HepG2 (cell line): ENCODE measurements at regions of chr17 and their contacts with region 1.

Region 1: GRCh38 chr17:45385331-45385997 is 47.2 kb downstream of the ARHGAP27 start:
- DNase-seq: peak; percentile 73
- ATAC-seq: peak; percentile 93
- H3K4me3 ChIP-seq: peak overlapping the region in 1 of 3 experiments; percentile 13; a peak in 1 of 6 replicates
- H3K27ac ChIP-seq: no peak overlapping the region
- H3K4me1 ChIP-seq: peaks cover 14% of the 10 kb centered on the region
- H3K27me3 ChIP-seq: peaks cover 0 to 45% of the 10 kb centered on the region in 2 experiments; a peak in 3 of 5 replicates
- CTCF ChIP-seq: peak; percentile 99
- EP300 ChIP-seq: no peak
- POLR2A ChIP-seq: no peak
- RAD21 ChIP-seq: peak; percentile 98

Region 2: GRCh38 chr17:45235416-45236281 is 149.8 kb before region 1 on chr17:
- CTCF ChIA-PET with region 1: interaction called, 16 read pairs
- POLR2A ChIA-PET with region 1: no interaction called
- in situ Hi-C with region 1: no loop called
- intact Hi-C with region 1: loop called (anchors 1 kb)
- DNase-seq: peak; percentile 58
- ATAC-seq: peak; percentile 13
- H3K4me3 ChIP-seq: no peak overlapping the region
- H3K27ac ChIP-seq: no peak overlapping the region
- H3K4me1 ChIP-seq: peaks cover 14% of the 10 kb centered on the region
- H3K27me3 ChIP-seq: peaks cover 4 to 30% of the 10 kb centered on the region in 2 experiments
- CTCF ChIP-seq: peak; percentile 85
- EP300 ChIP-seq: no peak
- POLR2A ChIP-seq: no peak
- RAD21 ChIP-seq: no peak

Region 3: DNA sequence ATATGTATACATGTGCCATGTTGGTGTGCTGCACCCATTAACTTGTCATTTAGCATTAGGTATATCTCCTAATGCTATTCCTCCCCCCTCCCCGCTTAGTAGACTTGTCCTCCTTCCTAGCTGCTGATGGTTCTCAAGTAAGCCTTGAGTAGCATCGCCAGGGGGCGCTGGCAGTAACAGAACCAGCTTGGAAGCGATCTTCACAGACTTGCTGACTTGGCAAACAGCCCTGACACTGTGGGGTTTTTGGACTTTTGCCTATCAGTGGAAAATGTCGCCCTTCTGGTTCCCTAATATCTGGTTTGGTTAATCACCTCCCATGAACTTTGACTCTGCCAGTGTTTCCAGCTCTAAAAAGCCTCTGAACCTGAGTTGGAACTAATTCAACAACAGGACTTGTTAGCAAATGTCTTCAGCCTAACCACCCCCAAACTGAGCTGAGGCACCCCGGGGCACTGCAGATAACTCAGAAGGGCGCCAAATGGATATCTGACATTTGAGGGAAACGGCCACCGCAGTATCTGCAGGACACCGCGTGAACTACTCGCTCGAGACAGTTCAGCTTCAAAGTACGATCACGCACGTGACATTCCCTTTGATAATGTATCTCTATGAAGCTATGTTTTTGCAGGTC is 108.1 kb before region 1 on chr17:
- CTCF ChIA-PET with region 1: interaction called, 114 read pairs
- POLR2A ChIA-PET with region 1: interaction called, 7 read pairs
- in situ Hi-C with region 1: loop called (anchors 5 kb)
- intact Hi-C with region 1: loop called (anchors 1 kb)
- DNase-seq: peak; percentile 92
- ATAC-seq: peak; percentile 90
- H3K4me3 ChIP-seq: no peak overlapping the region
- H3K27ac ChIP-seq: peak overlapping the region; percentile 22
- H3K4me1 ChIP-seq: peaks cover 8% of the 10 kb centered on the region
- H3K27me3 ChIP-seq: no peaks in the 10 kb centered on the region
- CTCF ChIP-seq: peak; percentile 95
- EP300 ChIP-seq: 0 out of 4 replicates have a peak, but pooled peaks of 1 of the 2 experiments have one; percentile 20
- POLR2A ChIP-seq: no peak
- RAD21 ChIP-seq: peak; percentile 93

Region 4: DNA sequence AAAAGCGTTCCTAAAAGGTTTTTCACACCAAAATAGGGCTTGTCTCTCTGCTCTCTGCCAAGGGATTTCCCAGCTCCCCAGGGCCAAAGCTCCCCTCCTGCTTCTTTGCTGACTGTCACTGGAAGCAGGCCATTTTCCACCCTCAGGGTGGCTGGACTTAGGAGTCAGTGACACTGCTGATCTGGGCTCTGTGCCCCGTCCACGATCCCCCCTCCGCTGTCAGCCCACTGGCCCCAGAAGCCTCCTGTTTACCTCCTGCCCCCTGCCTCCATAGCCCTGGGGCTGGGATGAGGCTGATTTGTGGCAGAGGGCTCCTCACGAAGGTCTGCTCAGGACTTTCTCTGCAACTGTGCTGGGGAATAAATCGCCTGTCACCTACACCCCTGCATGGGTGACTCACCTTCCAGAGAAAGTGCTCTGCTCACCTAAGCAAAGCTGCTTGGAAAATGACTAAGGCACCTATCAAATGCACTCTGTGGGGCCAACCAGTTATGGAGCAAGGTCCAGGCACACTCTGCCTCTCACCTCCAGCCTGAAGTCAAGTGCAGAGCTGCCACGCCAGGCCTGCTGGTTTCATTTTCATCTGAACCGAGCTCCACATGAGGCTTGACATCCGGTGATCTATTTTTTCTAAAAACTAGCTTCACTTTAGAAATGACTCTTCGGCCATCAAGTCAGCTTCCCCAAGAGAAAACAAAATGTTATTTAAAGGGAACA is 73.5 kb before region 1 on chr17:
- CTCF ChIA-PET with region 1: interaction called, 3 read pairs
- POLR2A ChIA-PET with region 1: no interaction called
- in situ Hi-C with region 1: no loop called
- intact Hi-C with region 1: loop called (anchors 2 kb)
- DNase-seq: peak; percentile 96
- ATAC-seq: peak; percentile 81
- H3K4me3 ChIP-seq: peak overlapping the region; percentile 21 to 64 (median 29); a peak in 5 of 6 replicates
- H3K27ac ChIP-seq: peak overlapping the region; percentile 78
- H3K4me1 ChIP-seq: peaks cover 73% of the 10 kb centered on the region
- H3K27me3 ChIP-seq: no peaks in the 10 kb centered on the region
- CTCF ChIP-seq: peak; percentile 22; the same call in 1 of the 2 replicates
- EP300 ChIP-seq: peak in 1 of 2 experiments; percentile 63; a peak in 1 of 4 replicates
- POLR2A ChIP-seq: no peak
- RAD21 ChIP-seq: peak; percentile 53